IMR-90 (cell line): ENCODE measurements at regions of chr11 and their contacts with region 1.

Region 1: DNA sequence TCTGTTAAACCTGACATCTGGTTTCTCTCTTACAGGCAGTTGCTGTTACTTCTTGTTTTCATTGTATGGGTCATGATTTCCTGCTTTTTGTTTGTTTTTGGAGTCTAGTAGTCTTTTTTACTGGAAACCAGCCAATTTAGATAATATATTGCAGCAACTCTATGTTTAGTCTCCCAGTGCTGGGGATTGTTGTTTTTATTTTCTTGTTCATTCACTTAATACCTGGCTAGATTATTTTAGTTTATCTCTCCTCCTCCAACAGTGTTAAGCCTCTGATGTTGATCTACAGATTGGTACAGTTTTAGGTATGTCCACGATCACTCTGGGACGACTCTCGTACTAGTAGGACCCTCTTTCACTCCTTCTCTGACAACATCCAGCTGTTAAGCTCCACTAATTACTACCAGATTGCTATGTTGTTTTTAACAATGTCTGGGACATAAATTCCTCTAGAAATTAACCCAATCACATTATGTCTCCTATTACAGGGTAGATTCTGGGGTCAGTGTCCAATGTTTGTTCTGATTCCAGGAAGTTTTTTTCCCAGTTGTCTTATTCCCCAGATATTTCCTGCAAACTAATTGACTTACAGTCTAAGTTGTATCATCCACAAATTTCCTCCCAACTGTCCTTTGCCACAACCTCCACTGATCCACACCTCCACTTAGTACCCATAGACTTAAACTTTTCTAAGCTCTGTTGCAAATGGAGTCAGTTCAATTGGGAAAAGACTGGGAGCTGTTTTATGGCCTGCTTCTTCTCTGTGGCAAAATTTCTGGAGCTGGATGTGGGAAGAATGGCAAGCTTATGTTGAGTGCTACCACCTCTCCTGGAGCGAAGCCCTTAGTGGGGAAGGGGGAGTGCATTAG is 1280.6 kb upstream of the CNTN5 start:
- DNase-seq: peak; percentile 59
- ATAC-seq: peak; percentile 24
- H3K4me3 ChIP-seq: no peak overlapping the region
- H3K27ac ChIP-seq: peak overlapping the region; percentile 74; the same call in 1 of the 2 replicates
- H3K4me1 ChIP-seq: no peaks in the 10 kb centered on the region; the same call in 1 of the 2 replicates
- H3K27me3 ChIP-seq: no peaks in the 10 kb centered on the region
- CTCF ChIP-seq: no peak
- POLR2A ChIP-seq: no peak
- RAD21 ChIP-seq: no peak

Region 2: DNA sequence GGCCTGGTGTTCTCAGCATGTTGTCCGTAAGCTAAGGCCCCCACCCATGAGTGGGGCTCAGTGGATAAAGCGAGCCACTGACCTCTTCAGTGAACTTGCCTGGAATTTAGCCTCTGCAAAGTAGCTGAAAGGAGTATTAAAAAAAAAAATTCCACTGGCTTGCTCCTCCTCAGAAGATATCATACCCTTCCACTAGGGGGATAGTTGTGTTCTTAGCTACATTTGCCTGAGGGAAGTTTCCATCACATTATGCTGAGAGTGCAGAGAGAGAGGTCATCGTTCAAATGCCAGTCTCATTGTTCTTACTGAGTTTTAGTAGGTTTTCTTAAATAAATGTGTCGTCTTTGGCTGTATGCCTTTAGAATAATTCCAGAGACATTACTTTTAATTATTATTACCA is 470.6 kb before region 1 on chr11:
- CTCF ChIA-PET with region 1: no interaction called
- POLR2A ChIA-PET with region 1: no interaction called
- dilution Hi-C with region 1: no loop called
- in situ Hi-C with region 1: no loop called
- intact Hi-C with region 1: no loop called
- DNase-seq: no peak
- ATAC-seq: no peak
- H3K4me3 ChIP-seq: no peak overlapping the region
- H3K27ac ChIP-seq: no peak overlapping the region
- H3K4me1 ChIP-seq: no peaks in the 10 kb centered on the region
- H3K27me3 ChIP-seq: no peaks in the 10 kb centered on the region
- CTCF ChIP-seq: no peak
- POLR2A ChIP-seq: no peak
- RAD21 ChIP-seq: no peak

Region 3: GRCh38 chr11:97574976-97575665 is 165.0 kb before region 1 on chr11:
- CTCF ChIA-PET with region 1: no interaction called
- POLR2A ChIA-PET with region 1: no interaction called
- dilution Hi-C with region 1: no loop called
- in situ Hi-C with region 1: no loop called
- intact Hi-C with region 1: no loop called
- DNase-seq: no peak
- ATAC-seq: no peak
- H3K4me3 ChIP-seq: no peak overlapping the region
- H3K27ac ChIP-seq: no peak overlapping the region
- H3K4me1 ChIP-seq: no peaks in the 10 kb centered on the region
- H3K27me3 ChIP-seq: no peaks in the 10 kb centered on the region
- CTCF ChIP-seq: no peak
- POLR2A ChIP-seq: no peak
- RAD21 ChIP-seq: no peak

Region 4: DNA sequence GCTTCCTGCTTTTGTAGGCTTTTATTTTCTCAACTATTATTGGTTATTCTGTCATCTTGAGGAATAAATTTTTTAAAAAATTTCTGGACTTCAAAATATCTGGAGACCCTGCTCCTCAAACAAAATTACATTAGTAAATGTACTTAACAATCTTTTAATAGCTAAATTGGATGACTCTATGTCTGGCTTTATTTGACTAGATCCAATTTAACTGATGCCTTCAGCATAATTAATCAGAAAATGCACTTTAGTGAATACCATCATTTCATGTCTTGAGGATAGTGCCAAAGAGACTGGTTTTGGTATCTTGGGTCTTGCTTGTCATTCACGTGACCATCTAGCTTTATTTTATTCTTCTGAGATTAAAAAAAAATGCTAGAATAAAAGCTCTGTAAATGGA is 49.1 kb before region 1 on chr11:
- CTCF ChIA-PET with region 1: no interaction called
- POLR2A ChIA-PET with region 1: no interaction called
- dilution Hi-C with region 1: no loop called
- in situ Hi-C with region 1: no loop called
- intact Hi-C with region 1: no loop called
- DNase-seq: no peak
- ATAC-seq: no peak
- H3K4me3 ChIP-seq: no peak overlapping the region
- H3K27ac ChIP-seq: no peak overlapping the region
- H3K4me1 ChIP-seq: no peaks in the 10 kb centered on the region
- H3K27me3 ChIP-seq: no peaks in the 10 kb centered on the region
- CTCF ChIP-seq: no peak
- POLR2A ChIP-seq: no peak
- RAD21 ChIP-seq: no peak

Region 5: DNA sequence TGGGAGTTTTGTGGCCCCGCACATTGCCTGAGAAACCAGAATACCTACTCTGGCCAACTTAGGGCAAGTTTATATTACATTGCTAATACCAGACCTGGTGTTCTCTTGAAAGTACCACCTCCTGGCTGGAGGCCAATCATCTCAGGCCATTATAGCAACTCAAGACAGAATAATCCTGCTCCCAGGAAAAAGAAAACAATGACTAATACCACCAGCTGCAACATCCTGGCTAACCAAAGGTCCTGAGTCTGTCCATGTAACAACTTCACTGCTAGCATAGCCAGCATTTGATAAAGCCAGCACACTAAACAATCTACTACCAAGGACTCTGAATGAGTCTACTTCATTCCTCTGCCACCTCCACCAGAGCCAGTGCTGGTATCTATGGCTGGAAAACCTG is 18.1 kb before region 1 on chr11:
- CTCF ChIA-PET with region 1: no interaction called
- POLR2A ChIA-PET with region 1: interaction called, 26 read pairs
- dilution Hi-C with region 1: no loop called
- in situ Hi-C with region 1: no loop called
- intact Hi-C with region 1: no loop called
- DNase-seq: peak; percentile 89
- ATAC-seq: peak; percentile 87
- H3K4me3 ChIP-seq: no peak overlapping the region
- H3K27ac ChIP-seq: no peak overlapping the region
- H3K4me1 ChIP-seq: peaks cover 8% of the 10 kb centered on the region; the same call in 1 of the 2 replicates
- H3K27me3 ChIP-seq: no peaks in the 10 kb centered on the region
- CTCF ChIP-seq: no peak
- POLR2A ChIP-seq: no peak
- RAD21 ChIP-seq: no peak

Region 6: GRCh38 chr11:97794876-97795275 is 54.7 kb after region 1 on chr11:
- CTCF ChIA-PET with region 1: no interaction called
- POLR2A ChIA-PET with region 1: no interaction called
- dilution Hi-C with region 1: no loop called
- in situ Hi-C with region 1: no loop called
- intact Hi-C with region 1: no loop called
- DNase-seq: no peak
- ATAC-seq: no peak
- H3K4me3 ChIP-seq: no peak overlapping the region
- H3K27ac ChIP-seq: no peak overlapping the region
- H3K4me1 ChIP-seq: no peaks in the 10 kb centered on the region
- H3K27me3 ChIP-seq: no peaks in the 10 kb centered on the region
- CTCF ChIP-seq: no peak
- POLR2A ChIP-seq: no peak
- RAD21 ChIP-seq: no peak